Left lung (tissue), 14 donors: ENCODE measurements at regions of chr3 and their contacts with region 1.

Region 1: DNA sequence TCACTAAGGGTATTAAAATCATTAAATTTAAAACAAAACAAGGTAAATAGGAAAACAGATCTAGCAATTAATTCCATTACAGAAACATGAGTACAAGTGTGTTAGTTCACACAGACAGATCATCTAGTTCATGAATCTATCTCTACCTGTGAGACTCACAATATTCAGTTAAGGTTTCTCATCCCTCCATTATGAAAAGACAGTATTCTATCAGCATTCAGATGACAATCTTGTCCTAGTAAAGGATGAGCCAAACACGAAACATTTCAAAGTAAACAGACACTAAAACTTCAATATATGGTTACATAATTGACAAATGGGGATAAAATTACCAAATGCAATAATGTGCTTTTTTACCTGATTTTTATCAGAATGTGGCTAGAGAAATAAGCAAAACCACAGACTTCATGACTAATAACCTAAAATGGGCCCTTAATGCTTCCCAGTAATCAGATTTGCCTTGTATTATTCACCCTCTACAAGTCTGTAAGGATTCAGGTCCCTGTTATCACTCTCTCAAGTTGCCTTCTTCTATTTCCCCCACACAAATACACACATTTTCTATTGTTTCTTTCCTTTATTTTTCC is 126.8 kb downstream of the DLG1 start:
- DNase-seq: no peak
- ATAC-seq: no peak
- H3K4me3 ChIP-seq: no peak overlapping the region
- H3K27ac ChIP-seq: no peak overlapping the region
- H3K4me1 ChIP-seq: peaks cover 4 to 16% of the 10 kb centered on the region in 2 donors
- H3K27me3 ChIP-seq: no peaks in the 10 kb centered on the region
- CTCF ChIP-seq: no peak

Region 2: DNA sequence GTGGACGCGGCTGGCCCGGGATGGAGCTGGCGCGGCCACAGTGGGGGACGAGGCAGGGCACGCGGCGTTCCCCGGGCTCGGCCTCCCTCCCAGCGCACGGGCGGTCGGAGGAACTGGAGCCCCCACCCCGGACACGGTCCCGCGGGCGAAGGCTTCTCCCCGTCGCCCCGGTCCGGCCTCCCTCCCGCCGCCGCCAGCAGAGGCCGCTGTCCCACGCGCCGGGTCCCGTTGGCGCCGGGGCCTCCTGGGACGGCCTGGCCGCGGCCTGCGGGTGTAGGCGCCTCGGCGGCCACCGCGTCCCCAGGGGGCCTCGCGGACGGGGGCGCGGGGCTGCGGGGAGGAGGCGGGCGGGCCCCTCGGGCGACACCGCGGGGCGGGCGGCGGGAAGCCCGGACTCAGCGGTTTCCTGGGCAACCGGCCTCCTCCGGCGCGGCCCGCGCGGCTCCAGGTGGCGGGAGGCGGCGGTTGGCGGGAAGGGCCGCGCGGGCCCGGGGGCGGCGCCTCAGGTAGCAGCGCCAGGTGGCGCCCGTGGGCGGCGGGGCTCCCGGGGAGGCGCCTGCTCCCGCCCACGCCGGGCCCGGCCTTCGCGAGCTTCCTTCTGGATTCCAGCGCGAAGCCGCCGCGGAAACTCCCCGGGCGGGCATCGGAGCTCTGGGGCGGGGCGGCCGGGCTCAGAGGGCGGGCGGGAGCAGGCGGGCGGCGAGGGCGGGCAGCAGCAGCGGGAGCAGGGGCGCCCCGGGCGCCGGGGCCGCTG is 168.7 kb before region 1 on chr3:
- intact Hi-C with region 1: loop called in 1 of 2 experiments (anchors 10 kb)
- DNase-seq: peak; percentile 70 to 98 (median 84)
- ATAC-seq: peak; percentile 90
- H3K4me3 ChIP-seq: peak overlapping the region; percentile 56 to 74
- H3K27ac ChIP-seq: peak overlapping the region; percentile 49 to 72
- H3K4me1 ChIP-seq: peaks cover 0 to 17% of the 10 kb centered on the region in 2 donors
- H3K27me3 ChIP-seq: no peaks in the 10 kb centered on the region
- CTCF ChIP-seq: peak; percentile 61 to 79

Region 3: DNA sequence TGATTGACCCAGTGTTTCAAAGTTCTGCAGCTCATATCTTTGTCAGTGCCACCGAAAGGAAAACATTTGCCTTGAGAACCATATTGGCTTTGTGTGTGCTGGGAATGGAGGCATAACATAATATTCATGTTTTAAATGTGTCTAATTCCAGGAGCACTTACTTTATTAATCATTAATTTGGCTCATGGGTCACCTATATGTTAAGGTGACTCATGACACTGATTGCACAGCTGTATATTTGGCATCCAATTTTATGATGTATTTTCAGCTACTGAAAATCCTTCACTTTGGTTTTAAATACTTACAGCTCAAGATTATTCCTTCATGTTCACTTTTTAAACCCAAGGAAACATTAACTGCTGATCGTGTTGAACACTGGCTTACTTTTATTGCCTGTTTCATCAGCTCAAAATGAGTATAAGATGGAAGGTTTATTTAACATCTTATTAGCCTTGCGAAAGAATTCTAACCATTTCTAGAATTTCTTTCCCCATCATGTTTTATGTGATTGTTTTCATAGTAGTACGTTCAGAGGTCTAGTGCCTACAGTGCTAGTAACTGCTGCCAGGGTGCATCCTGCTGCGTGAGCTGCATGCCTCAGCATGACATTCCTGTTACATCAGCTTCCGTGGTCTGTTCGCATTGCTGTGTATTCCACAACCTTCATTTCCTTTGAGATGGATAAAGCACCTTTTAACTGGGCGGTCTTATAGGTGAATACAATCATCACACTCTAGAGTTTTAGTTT is 683.2 kb after region 1 on chr3:
- intact Hi-C with region 1: no loop called
- DNase-seq: peak in 1 of 4 donors; percentile 17
- ATAC-seq: no peak
- H3K4me3 ChIP-seq: no peak overlapping the region
- H3K27ac ChIP-seq: no peak overlapping the region
- H3K4me1 ChIP-seq: no peaks in the 10 kb centered on the region
- H3K27me3 ChIP-seq: no peaks in the 10 kb centered on the region
- CTCF ChIP-seq: no peak